Activated T-helper 1 cell treated with anti-CD3 and anti-CD28 coated beads, Interleukin-12 subunit alpha, Interleukin-12 subunit beta, Interleukin-2, Interleukin-4 antibody, amounts not matched to agents 30 ng/mL and 10 ng/mL and 1 ng/mL, durations not matched to agents 14 hours and 24 hours and 36 hours (primary cell): ENCODE measurements at regions of chr12 and their contacts with region 1.

Region 1: DNA sequence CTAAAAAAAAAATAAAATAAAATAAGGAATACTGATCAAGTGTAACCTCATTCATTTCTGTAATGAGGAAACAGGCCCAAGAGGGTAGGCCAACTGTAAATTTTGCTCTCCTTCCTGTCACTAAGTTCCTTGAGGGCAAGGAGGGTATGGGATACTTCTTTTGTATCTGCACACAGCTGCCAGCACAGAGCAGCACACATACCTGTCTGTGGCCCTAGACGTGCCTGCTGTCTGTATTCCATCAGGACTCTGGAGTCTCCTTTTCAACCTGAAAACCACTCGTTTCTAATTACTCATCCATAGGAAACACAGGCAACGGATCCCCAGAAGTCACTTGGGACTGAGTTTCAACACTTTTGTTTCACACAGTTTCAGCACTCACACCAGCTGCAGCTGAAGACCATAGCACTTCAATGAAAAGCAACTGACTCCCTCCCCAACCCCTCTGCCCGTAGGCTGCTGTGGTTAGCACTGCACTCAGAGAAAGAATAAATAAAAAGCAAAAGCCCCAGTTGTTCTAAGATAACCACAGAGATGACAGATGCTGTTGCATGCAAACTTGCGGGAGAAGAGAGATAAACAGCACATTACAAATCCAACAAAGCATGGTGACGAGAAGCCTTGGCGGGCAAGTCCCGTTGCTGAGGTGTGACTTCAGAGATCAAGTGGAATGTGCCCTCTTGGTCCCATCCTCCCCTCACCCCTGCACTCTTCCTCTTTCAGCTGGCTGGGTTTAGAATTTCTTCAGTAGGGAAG is 24.9 kb downstream of the CRACR2A start:
- DNase-seq: peak; percentile 69
- H3K4me3 Mint-ChIP-seq: peak overlapping the region; percentile 83
- H3K27ac Mint-ChIP-seq: peak overlapping the region; percentile 95
- H3K4me1 Mint-ChIP-seq: peaks cover 46% of the 10 kb centered on the region
- H3K27me3 Mint-ChIP-seq: no peaks in the 10 kb centered on the region

Region 2: DNA sequence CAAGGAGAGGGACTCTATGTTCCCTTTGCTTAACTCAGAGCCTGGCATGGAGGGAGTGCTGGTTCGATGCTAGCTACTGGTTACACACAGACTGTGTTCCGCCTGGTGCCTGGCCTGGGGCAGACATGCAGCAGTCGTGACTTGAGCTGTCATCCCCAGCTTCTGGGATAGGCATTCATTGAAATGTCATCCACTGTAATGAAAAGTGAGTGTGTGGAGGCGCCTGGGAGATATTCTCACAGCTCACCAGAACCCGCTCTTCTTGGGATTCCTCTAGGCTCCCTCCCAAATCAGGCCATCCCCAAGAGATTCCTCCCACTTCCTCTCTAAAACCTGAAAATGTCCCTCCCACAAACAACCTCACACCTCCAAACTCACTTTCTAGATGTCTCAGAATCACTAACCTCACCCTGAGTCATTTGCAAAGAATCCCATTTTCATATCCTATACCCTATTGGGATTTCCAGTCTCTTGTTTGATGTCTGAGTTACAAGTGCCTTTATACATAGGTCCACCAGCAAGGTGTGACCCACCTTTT is 57.9 kb before region 1 on chr12:
- intact Hi-C with region 1: loop called (anchors 1 kb)
- DNase-seq: no peak
- H3K4me3 Mint-ChIP-seq: peak overlapping the region; percentile 32
- H3K27ac Mint-ChIP-seq: peak overlapping the region; percentile 68
- H3K4me1 Mint-ChIP-seq: peaks cover 24% of the 10 kb centered on the region
- H3K27me3 Mint-ChIP-seq: no peaks in the 10 kb centered on the region

Region 3: DNA sequence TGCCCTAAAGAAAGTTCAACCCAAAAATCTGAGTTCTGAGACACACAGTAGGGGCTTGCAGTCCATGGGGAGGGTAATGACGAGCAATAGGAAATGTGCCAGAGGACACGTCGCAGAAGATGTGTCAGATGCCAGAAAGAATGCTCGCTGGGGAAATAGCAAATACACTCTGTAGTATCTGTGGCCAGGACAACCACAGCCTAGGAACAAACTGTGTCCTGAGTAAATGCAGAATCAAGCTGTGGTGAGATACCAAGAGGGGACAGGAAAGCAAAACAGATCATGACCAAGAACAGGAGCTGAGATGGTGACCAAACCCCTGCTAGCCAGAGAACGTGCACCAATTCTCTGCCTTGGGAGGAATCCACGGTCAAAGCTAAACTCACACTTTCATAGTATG is 15.7 kb after region 1 on chr12:
- intact Hi-C with region 1: loop called (anchors 1 kb)
- DNase-seq: peak; percentile 19
- H3K4me3 Mint-ChIP-seq: peak overlapping the region; percentile 23
- H3K27ac Mint-ChIP-seq: peak overlapping the region; percentile 79
- H3K4me1 Mint-ChIP-seq: peaks cover 68% of the 10 kb centered on the region
- H3K27me3 Mint-ChIP-seq: no peaks in the 10 kb centered on the region